BJ (cell line): ENCODE measurements at regions of chr2 and their contacts with region 1.

Region 1: GRCh38 chr2:135839713-135840112 is 2.7 kb upstream of the LCT start:
- DNase-seq: peak; percentile 96
- H3K4me3 ChIP-seq: no peak overlapping the region
- H3K27me3 ChIP-seq: no peaks in the 10 kb centered on the region
- CTCF ChIP-seq: no peak

Region 2: GRCh38 chr2:135825550-135826176 is 14.1 kb before region 1 on chr2:
- CTCF ChIA-PET with region 1: interaction called, 11 read pairs
- POLR2A ChIA-PET with region 1: no interaction called
- DNase-seq: no peak
- H3K4me3 ChIP-seq: no peak overlapping the region
- H3K27me3 ChIP-seq: no peaks in the 10 kb centered on the region
- CTCF ChIP-seq: no peak

Region 3: GRCh38 chr2:135863233-135863632 is 23.5 kb after region 1 on chr2:
- CTCF ChIA-PET with region 1: no interaction called
- POLR2A ChIA-PET with region 1: no interaction called
- DNase-seq: no peak
- H3K4me3 ChIP-seq: no peak overlapping the region
- H3K27me3 ChIP-seq: no peaks in the 10 kb centered on the region
- CTCF ChIP-seq: no peak